Heart left ventricle (tissue), 16 donors: ENCODE measurements at regions of chr22 and their contacts with region 1.

Region 1: DNA sequence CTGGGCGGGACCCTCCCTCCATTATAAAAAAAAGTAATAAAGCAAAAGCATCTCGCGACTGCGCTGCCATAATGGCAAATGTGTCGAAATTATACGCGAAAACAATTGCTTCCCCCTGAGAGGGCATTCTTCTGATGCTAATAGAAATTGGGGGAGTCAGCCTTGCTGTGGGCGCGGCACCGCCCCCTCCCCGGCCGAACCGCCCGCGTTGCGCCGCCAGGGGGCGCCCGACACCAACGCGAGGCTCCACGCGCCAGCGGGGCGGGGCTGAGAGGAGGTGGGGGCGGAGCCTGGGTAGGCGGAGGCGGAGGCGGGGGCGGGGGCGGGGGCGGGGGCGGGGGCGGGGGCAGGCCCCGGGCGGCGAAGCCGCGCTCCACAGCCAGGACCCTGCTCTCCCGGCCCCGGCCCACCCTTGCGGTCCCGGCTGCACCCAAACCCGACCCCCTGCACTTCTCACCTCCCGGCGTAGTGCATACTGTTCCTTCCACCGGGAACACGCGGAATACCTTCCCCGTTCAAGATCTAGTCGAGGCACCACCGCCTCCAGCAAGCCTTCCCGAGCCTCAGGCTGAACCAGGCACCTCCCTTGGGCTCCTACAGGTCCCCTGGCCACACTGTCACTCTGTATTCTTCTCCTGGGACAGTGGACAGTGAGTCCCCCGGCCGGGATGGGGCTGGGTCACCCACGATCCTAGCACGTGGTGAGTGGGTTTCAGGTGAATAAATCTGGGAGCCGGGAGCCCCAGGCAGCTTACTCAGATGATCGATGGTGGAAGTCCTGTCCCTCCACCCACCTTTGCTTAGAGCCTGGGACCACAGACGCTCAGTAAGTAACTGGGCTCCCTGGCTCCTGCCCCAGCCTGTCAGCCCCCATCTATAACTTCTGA is 15.5 kb upstream of the UPK3A start:
- DNase-seq: peak; percentile 84 to 95 (median 87)
- ATAC-seq: peak; percentile 23 to 88 (median 76)
- H3K4me3 ChIP-seq: peak overlapping the region; percentile 33 to 69 (median 56)
- H3K27ac ChIP-seq: peak overlapping the region in 6 of 12 donors; percentile 5 to 37 (median 22)
- H3K4me1 ChIP-seq: peaks cover 0 to 37% (median 23%) of the 10 kb centered on the region in 12 donors
- H3K27me3 ChIP-seq: peaks cover 0 to 5% (median 0%) of the 10 kb centered on the region in 9 donors
- CTCF ChIP-seq: peak; percentile 78 to 98 (median 92)
- POLR2A ChIP-seq: peak in 1 of 2 donors; percentile 9

Region 2: GRCh38 chr22:45101515-45102227 is 167.5 kb before region 1 on chr22:
- intact Hi-C with region 1: loop called in 1 of 10 experiments (anchors 10 kb)
- DNase-seq: peak in 4 of 5 donors; percentile 44 to 60 (median 50)
- ATAC-seq: peak; percentile 51 to 80 (median 59)
- H3K4me3 ChIP-seq: no peak overlapping the region
- H3K27ac ChIP-seq: no peak overlapping the region
- H3K4me1 ChIP-seq: no peaks in the 10 kb centered on the region
- H3K27me3 ChIP-seq: peaks cover 0 to 70% (median 21%) of the 10 kb centered on the region in 9 donors
- CTCF ChIP-seq: peak in 7 of 12 donors; percentile 19 to 47 (median 25)
- POLR2A ChIP-seq: no peak

Region 3: GRCh38 chr22:45208993-45209801 is 60.0 kb before region 1 on chr22:
- intact Hi-C with region 1: no loop called
- DNase-seq: peak in 1 of 5 donors; percentile 33
- ATAC-seq: peak in 1 of 4 donors; percentile 5
- H3K4me3 ChIP-seq: no peak overlapping the region
- H3K27ac ChIP-seq: no peak overlapping the region
- H3K4me1 ChIP-seq: peaks cover 0 to 30% (median 17%) of the 10 kb centered on the region in 12 donors
- H3K27me3 ChIP-seq: no peaks in the 10 kb centered on the region
- CTCF ChIP-seq: peak; percentile 19 to 62 (median 45)
- POLR2A ChIP-seq: no peak

Region 4: DNA sequence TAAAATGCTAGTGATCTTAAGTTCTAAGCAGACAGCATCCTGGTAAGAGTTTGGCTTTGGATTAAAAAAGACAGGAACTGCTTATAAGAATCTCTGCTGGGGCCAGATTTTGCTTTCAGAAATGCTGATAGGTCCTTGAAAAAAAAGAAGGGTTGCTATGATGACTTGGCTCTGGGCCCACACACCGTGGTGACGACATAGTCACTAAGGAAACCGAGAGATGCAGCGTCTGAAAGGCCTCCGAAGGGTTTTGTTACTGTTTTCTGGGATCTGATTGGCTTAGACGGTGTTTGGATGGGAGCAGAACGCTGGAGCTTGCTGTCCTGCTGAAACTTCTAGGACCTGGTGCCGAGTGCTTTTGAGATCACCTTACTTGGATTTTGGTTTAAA is 49.0 kb after region 1 on chr22:
- intact Hi-C with region 1: loop called in 4 of 10 experiments (anchors 2 to 10 kb)
- DNase-seq: peak; percentile 75 to 85 (median 83)
- ATAC-seq: peak in 3 of 4 donors; percentile 28 to 77 (median 73)
- H3K4me3 ChIP-seq: peak overlapping the region in 7 of 12 donors; percentile 2 to 38 (median 18)
- H3K27ac ChIP-seq: peak overlapping the region; percentile 35 to 92 (median 74)
- H3K4me1 ChIP-seq: peaks cover 0 to 74% (median 42%) of the 10 kb centered on the region in 12 donors
- H3K27me3 ChIP-seq: no peaks in the 10 kb centered on the region
- CTCF ChIP-seq: no peak
- POLR2A ChIP-seq: no peak

Region 5: DNA sequence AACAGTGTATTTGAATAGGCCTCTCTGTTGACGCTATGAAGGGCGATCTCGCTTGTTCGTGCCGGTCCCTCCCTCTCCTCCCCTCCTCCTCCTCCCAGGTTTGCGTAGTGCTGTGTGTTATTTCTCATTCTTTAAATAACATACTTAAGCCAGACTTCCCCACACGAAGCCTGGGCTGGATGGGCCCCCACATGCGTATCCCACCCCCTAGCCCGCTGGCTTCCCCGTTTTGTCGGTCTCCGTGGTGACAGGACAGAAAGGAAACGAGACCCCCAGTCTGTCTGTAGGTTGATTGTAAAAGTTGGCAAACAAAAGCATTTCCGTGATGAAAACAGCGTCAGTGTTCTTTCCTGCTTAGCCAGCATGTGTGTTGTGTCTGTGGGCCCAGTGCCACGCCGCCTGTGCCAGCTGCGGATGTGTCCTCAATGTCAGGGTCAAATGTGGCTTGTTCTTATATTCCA is 67.8 kb after region 1 on chr22:
- intact Hi-C with region 1: loop called in 1 of 10 experiments (anchors 10 kb)
- DNase-seq: peak; percentile 78 to 89 (median 83)
- ATAC-seq: peak; percentile 28 to 76 (median 56)
- H3K4me3 ChIP-seq: peak overlapping the region in 1 of 12 donors; percentile 8
- H3K27ac ChIP-seq: peak overlapping the region in 10 of 12 donors; percentile 7 to 80 (median 62)
- H3K4me1 ChIP-seq: peaks cover 0 to 55% (median 39%) of the 10 kb centered on the region in 12 donors
- H3K27me3 ChIP-seq: no peaks in the 10 kb centered on the region
- CTCF ChIP-seq: no peak
- POLR2A ChIP-seq: no peak

Region 6: DNA sequence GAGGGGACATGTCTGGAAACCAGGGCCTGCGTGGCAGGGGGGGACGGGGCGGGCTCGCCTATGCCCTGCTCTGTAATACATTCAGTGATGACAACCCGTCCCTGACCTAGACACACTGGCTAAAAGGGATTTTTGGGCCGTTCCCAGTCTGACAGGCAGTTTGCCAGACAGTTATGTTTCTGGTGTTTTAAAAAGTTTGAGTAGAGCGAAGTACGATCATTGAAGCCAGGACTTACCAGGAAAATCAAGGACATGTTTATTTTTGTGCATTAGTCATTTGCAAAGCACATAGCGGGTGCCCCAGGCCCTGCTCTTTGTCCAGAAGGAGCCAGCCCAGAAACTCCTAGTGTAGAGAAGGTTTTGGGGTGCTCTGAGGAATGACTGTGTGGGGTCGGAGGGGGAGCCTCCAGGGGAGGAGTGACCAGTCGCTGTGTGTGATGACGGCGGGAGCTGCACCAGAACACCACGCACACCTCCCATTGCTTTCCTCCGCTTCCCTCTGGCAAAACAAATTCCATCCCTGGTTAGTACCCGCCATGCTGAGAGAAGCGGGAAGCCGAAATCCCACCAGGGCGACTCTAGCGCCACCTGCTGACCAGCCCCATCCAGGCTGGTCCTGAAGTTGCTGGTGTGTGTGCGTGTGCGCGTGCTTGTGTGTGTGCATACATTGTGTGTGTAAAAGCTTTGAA is 284.3 kb after region 1 on chr22:
- intact Hi-C with region 1: loop called (anchors 1 to 5 kb)
- DNase-seq: peak; percentile 74 to 86 (median 77)
- ATAC-seq: peak; percentile 32 to 61 (median 52)
- H3K4me3 ChIP-seq: no peak overlapping the region
- H3K27ac ChIP-seq: peak overlapping the region; percentile 57 to 86 (median 72)
- H3K4me1 ChIP-seq: peaks cover 0 to 54% (median 31%) of the 10 kb centered on the region in 12 donors
- H3K27me3 ChIP-seq: peaks cover 0 to 3% (median 0%) of the 10 kb centered on the region in 9 donors
- CTCF ChIP-seq: peak; percentile 79 to 94 (median 88)
- POLR2A ChIP-seq: no peak